Activated CD4-positive, alpha-beta memory T cell treated with anti-CD3 and anti-CD28 coated beads for 36 hours (primary cell): ENCODE measurements at regions of chr5 and their contacts with region 1.

Region 1: DNA sequence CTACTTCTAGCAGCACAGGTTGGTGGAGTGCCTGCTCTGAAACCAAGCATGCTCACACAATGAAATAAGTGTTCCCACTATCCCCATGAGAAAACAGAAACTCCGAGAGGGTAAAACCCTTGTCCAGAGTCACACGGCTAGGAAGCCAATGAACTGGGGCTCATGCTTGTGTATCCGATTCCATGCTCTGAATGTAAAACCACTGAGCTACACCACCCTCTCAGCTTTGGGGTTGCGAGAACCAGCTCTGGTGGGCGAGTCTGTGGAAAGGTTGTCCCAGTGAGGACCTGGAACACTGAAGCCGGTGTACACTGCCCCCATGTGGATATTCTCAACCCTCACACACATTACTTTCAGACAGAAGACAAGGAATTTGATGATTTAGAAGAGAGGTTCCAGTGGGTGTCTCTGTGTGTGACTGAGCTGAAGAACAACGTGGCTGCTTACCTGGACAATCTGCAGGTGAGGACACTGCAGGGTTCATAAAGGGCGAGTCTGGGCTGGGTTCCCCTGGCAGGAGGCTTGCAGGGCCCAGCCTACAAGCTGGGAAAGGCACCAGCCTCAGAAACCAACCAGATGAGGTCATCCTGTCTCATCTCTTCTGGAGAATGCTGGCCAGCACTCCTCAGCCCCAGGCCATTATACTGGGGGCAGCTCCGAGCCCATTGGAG is 37.4 kb downstream of the ARHGEF37 start:
- DNase-seq: peak; percentile 54
- H3K4me3 Mint-ChIP-seq: no peak overlapping the region
- H3K27ac Mint-ChIP-seq: no peak overlapping the region
- H3K4me1 Mint-ChIP-seq: peaks cover 12% of the 10 kb centered on the region
- H3K27me3 Mint-ChIP-seq: no peaks in the 10 kb centered on the region

Region 2: DNA sequence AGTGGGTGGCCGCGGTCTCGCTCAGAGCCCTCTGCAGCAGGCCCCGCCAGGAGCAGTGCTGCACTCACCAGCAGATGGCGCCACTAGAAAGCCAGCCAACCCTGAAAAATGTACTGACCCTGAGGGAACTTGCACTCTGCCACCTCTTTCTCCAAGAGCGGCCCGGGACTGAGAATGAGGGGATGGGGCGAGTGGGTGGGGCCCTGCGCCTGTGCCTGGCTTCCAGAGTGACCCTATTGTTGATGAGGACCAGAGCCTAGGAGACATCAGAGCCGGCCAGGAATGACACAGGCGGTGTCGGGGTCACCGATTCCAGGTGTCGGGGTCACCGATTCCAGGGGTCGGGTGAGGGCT is 236.8 kb before region 1 on chr5:
- CTCF ChIA-PET with region 1: interaction called, 4 read pairs
- POLR2A ChIA-PET with region 1: no interaction called
- intact Hi-C with region 1: loop called (anchors 5 kb)
- DNase-seq: peak; percentile 82
- H3K4me3 Mint-ChIP-seq: no peak overlapping the region
- H3K27ac Mint-ChIP-seq: no peak overlapping the region
- H3K4me1 Mint-ChIP-seq: no peaks in the 10 kb centered on the region
- H3K27me3 Mint-ChIP-seq: peaks cover 1% of the 10 kb centered on the region

Region 3: DNA sequence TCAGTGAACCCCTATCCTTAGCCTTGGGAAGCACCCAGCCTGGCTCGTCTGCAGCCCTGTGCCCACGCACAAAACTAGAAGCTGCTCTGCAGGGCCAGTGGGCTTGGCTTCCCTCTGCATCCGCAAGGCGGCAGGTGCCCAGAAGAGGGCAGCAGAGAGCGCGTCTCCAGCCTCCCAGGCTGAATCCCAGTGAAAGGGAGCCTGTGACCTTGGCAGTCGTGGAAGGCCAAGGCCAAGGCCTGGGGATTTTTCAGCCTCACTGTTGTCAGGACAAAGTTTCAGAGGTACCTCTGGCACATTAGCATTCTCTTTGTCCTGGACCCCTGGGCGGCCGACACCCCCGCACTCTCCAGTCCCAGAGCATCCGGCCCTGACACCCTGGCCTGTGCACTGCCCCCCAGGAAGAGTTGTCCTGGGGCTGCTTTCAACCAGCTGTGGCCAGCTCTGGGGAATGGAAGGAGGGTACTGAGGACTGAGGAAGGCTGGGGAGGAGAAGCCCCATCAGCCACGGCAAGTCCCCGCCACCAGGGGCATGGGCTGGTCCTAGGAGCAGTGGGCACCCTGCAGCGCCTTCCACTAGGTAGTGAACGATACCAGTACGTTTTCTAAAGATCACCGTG is 176.0 kb before region 1 on chr5:
- CTCF ChIA-PET with region 1: interaction called, 5 read pairs
- POLR2A ChIA-PET with region 1: no interaction called
- intact Hi-C with region 1: loop called (anchors 2 kb)
- DNase-seq: peak; percentile 85
- H3K4me3 Mint-ChIP-seq: no peak overlapping the region
- H3K27ac Mint-ChIP-seq: no peak overlapping the region
- H3K4me1 Mint-ChIP-seq: peaks cover 23% of the 10 kb centered on the region
- H3K27me3 Mint-ChIP-seq: no peaks in the 10 kb centered on the region

Region 4: GRCh38 chr5:149576021-149576420 is 42.7 kb before region 1 on chr5:
- CTCF ChIA-PET with region 1: interaction called, 4 read pairs
- POLR2A ChIA-PET with region 1: no interaction called
- intact Hi-C with region 1: loop called (anchors 2 kb)
- DNase-seq: peak; percentile 48
- H3K4me3 Mint-ChIP-seq: no peak overlapping the region
- H3K27ac Mint-ChIP-seq: peak overlapping the region; percentile 83
- H3K4me1 Mint-ChIP-seq: peaks cover 26% of the 10 kb centered on the region
- H3K27me3 Mint-ChIP-seq: peaks cover 3% of the 10 kb centered on the region

Region 5: DNA sequence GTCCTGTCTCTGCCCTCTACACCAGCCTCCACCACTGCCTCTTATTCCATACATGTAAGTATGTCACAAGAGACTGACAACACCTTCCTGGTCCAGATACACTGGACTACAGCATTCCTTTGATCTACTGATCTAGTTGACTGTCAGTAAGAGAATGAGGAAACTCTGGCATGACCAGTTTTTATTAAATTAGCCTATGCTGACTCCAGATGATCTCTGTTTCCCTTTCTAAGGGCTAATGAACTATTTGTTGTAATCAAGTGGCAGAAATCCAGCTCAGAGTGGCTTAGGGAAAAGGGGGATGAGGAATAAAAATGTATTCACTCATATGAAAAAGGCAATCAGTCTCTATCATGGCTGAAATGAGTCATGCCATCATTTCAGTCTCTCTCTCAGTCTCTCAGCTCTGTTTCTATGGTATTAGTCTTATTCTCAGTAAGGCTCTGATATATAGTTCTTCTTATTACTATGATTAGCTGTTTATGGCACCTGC is 31.9 kb before region 1 on chr5:
- CTCF ChIA-PET with region 1: interaction called, 5 read pairs
- POLR2A ChIA-PET with region 1: no interaction called
- intact Hi-C with region 1: loop called (anchors 2 kb)
- DNase-seq: no peak
- H3K4me3 Mint-ChIP-seq: no peak overlapping the region
- H3K27ac Mint-ChIP-seq: no peak overlapping the region
- H3K4me1 Mint-ChIP-seq: peaks cover 10% of the 10 kb centered on the region
- H3K27me3 Mint-ChIP-seq: peaks cover 1% of the 10 kb centered on the region

Region 6: GRCh38 chr5:149740866-149741459 is 122.2 kb after region 1 on chr5:
- CTCF ChIA-PET with region 1: no interaction called
- POLR2A ChIA-PET with region 1: no interaction called
- intact Hi-C with region 1: no loop called
- DNase-seq: no peak
- H3K4me3 Mint-ChIP-seq: no peak overlapping the region
- H3K27ac Mint-ChIP-seq: no peak overlapping the region
- H3K4me1 Mint-ChIP-seq: no peaks in the 10 kb centered on the region
- H3K27me3 Mint-ChIP-seq: no peaks in the 10 kb centered on the region